ENCODE measurements at regions of chr3 and their contacts with region 1.

Region 1: GRCh38 chr3:141441381-141442364 is 45.2 kb upstream of the RASA2 start:
- DNase-seq: peak; percentile 86 to 92
- ATAC-seq: peak; percentile 90
- H3K4me3 ChIP-seq: peak overlapping the region in 1 of 2 donors; percentile 23
- H3K27ac ChIP-seq: peak overlapping the region; percentile 91 to 96
- H3K4me1 ChIP-seq: peaks cover 5 to 17% of the 10 kb centered on the region in 2 donors
- H3K27me3 ChIP-seq: no peaks in the 10 kb centered on the region

Region 2: GRCh38 chr3:141370065-141370533 is 71.6 kb before region 1 on chr3:
- intact Hi-C with region 1: loop called (anchors 2 to 5 kb)
- DNase-seq: no peak
- ATAC-seq: peak; percentile 88
- H3K4me3 ChIP-seq: peak overlapping the region; percentile 50 to 55
- H3K27ac ChIP-seq: no peak overlapping the region
- H3K4me1 ChIP-seq: peaks cover 0 to 1% of the 10 kb centered on the region in 2 donors
- H3K27me3 ChIP-seq: no peaks in the 10 kb centered on the region

Measured in aorta (tissue), 5 donors.